ENCODE measurements at regions of chr3 and their contacts with region 1.

Region 1: GRCh38 chr3:129824926-129825541 is 68.5 kb downstream of the TMCC1 start:
- DNase-seq: no peak
- H3K4me3 ChIP-seq: no peak overlapping the region
- H3K27ac ChIP-seq: no peak overlapping the region
- H3K4me1 ChIP-seq: peaks cover 0 to 9% (median 4%) of the 10 kb centered on the region in 4 donors
- H3K27me3 ChIP-seq: no peaks in the 10 kb centered on the region
- CTCF ChIP-seq: peak; percentile 54 to 62

Region 2: GRCh38 chr3:129650256-129650872 is 174.7 kb before region 1 on chr3:
- intact Hi-C with region 1: loop called (anchors 2 kb)
- DNase-seq: peak; percentile 79 to 81
- H3K4me3 ChIP-seq: no peak overlapping the region
- H3K27ac ChIP-seq: no peak overlapping the region
- H3K4me1 ChIP-seq: peaks cover 0 to 29% (median 19%) of the 10 kb centered on the region in 4 donors
- H3K27me3 ChIP-seq: no peaks in the 10 kb centered on the region
- CTCF ChIP-seq: peak; percentile 64 to 84

Measured in tibial artery (tissue), 4 donors.